ENCODE measurements at regions of chr1 and their contacts with region 1.

Region 1: DNA sequence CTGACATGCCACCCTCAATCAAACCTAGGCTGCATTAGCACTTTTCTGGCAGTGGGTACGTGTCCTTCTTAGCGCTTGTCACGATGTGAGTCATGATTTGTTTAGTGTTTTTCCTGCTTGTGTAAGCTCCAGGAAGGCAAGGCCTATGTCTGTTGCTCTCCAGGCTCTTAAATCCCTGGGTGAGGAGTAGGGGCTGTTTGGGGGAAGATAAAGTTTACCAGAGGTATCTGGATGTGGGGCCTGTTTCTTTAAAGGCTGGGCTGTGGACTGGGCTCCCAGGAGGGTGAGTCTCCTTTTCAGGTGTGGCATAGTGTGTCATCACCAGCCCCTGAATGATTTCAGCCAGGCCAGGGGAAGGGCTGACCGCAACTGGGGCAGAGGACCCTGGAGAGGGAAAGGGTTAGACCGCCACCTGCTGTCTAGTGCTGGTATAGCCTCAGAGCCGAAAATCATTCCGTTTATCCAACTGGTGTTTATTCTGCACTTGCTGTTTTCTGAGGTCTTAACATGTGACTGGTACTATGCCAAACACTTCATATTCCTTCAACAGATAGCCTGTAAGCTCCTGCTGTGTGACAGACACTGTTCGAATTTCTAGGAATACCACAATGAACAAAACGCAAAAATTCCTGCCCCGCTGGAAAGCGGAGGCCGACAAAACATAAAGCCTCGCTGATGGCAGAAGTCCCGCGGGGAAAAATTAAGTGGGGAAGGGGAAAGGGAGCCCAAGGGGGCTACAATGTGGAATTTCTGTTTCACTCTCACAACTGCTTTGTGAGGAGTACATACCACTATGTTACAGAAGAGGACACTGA is 9.7 kb downstream of the SERINC2 start:
- DNase-seq: peak; percentile 79
- H3K4me3 ChIP-seq: no peak overlapping the region
- H3K27ac ChIP-seq: no peak overlapping the region
- H3K4me1 ChIP-seq: no peaks in the 10 kb centered on the region
- H3K27me3 ChIP-seq: no peaks in the 10 kb centered on the region
- CTCF ChIP-seq: peak; percentile 75 to 96 (median 94)
- POLR2A ChIP-seq: no peak

Region 2: DNA sequence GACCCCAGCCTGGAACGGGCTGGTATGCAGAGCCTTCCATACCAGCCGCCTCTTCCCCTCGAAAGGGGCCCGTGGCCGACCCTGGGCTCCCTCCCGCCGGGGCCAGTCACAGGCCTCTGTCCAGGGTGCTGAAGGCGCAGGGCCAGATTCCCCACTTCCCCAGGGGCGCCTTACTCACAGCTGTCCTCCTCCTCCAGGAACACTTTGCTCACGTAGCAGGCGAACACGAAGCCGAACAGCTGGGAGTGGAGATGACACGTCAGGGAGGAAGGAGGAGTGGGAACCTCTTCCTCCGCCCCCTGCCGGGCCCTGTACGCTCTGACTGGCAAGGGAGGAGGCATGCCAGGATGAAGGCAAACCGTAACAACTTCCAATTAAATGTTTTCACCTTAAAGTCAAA is 240.4 kb before region 1 on chr1:
- intact Hi-C with region 1: loop called (anchors 10 kb)
- DNase-seq: peak; percentile 85
- H3K4me3 ChIP-seq: peak overlapping the region; percentile 32 to 38
- H3K27ac ChIP-seq: no peak overlapping the region
- H3K4me1 ChIP-seq: peaks cover 12% of the 10 kb centered on the region
- H3K27me3 ChIP-seq: no peaks in the 10 kb centered on the region
- CTCF ChIP-seq: peak in 2 of 3 experiments; percentile 18 to 46
- POLR2A ChIP-seq: no peak

Measured in testis (tissue), 5 donors.